ENCODE measurements at regions of chr1 and their contacts with region 1.

Region 1: GRCh38 chr1:70210820-70211219 is 5.4 kb upstream of the LRRC40 start:
- DNase-seq: no peak
- ATAC-seq: peak; percentile 34
- H3K4me3 Mint-ChIP-seq: no peak overlapping the region
- H3K27ac Mint-ChIP-seq: no peak overlapping the region
- H3K4me1 Mint-ChIP-seq: peaks cover 48% of the 10 kb centered on the region
- H3K27me3 Mint-ChIP-seq: no peaks in the 10 kb centered on the region

Region 2: GRCh38 chr1:70265946-70266345 is 55.1 kb after region 1 on chr1:
- CTCF ChIA-PET with region 1: no interaction called
- POLR2A ChIA-PET with region 1: interaction called, 12 read pairs
- intact Hi-C with region 1: no loop called
- DNase-seq: no peak
- ATAC-seq: no peak
- H3K4me3 Mint-ChIP-seq: no peak overlapping the region
- H3K27ac Mint-ChIP-seq: no peak overlapping the region
- H3K4me1 Mint-ChIP-seq: no peaks in the 10 kb centered on the region
- H3K27me3 Mint-ChIP-seq: no peaks in the 10 kb centered on the region

Measured in activated CD4-positive, alpha-beta T cell treated with anti-CD3 and anti-CD28 coated beads for 36 hours (primary cell).